Ascending aorta (tissue), 2 donors: ENCODE measurements at regions of chr5 and their contacts with region 1.

Region 1: DNA sequence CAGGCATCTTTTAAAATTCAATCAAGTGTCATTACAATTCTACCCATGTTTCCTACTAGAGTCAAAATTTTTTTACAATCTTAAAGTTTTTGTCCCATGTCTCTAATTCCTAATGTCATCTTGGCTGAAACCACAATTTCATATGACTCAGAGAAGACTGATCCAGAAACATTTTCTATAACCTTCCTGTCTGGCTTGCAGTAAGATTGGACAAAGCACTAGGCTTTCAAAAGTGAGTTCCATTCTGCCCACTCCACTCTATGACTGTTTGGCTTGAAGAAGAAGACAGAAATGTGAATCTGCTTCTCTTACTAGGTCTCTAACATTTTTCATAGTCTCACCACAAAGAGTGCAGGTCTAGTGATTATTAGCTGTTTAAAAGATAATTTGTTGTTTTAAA is 88.8 kb downstream of the NR3C1 start:
- DNase-seq: no peak
- H3K4me3 ChIP-seq: no peak overlapping the region
- H3K27ac ChIP-seq: peak overlapping the region in 1 of 2 donors; percentile 6
- H3K4me1 ChIP-seq: peaks cover 0 to 34% of the 10 kb centered on the region in 2 donors
- H3K27me3 ChIP-seq: no peaks in the 10 kb centered on the region
- CTCF ChIP-seq: no peak

Region 2: DNA sequence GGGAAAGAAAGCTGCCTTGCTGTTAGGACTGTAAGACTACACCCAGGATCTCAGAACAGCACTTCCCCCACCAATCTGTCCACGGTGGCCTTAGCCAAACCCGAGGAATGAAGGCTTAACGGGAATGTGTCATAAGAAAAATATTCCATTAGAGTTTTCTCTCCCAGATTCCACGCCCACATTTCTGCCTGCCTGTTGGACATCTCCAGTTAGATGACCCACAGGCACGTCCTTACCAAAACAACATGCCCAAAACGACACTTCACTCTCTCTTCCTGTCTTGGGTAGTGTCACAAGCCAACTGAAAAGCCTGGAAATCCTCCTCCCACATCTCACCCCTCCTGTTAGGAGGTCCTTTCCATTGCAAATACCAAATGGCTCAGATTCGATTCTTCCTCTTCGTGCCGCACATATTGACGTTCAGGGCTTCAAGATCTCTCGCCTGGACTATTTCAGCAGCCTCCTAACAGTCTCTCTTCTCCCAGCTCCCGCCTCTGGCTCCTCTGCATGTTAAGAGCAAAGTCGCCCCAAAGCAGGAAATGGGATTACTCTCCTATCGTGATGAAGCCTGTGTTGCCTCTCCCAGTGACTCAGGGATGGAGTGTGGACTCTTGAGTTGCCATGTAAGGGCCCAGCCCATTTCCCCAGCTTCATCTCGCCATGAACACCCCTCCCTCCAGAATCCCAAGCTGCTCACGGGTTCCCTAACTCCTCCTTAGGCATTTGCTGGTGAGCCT is 70.5 kb before region 1 on chr5:
- intact Hi-C with region 1: loop called (anchors 5 kb)
- DNase-seq: peak in 1 of 2 donors; percentile 86
- H3K4me3 ChIP-seq: peak overlapping the region; percentile 19 to 44
- H3K27ac ChIP-seq: peak overlapping the region; percentile 63 to 70
- H3K4me1 ChIP-seq: peaks cover 3 to 13% of the 10 kb centered on the region in 2 donors
- H3K27me3 ChIP-seq: no peaks in the 10 kb centered on the region
- CTCF ChIP-seq: no peak